ENCODE measurements at regions of chr7 and their contacts with region 1.

Region 1: GRCh38 chr7:36487756-36488336 is 98.2 kb downstream of the ANLN start:
- DNase-seq: no peak
- ATAC-seq: no peak
- H3K4me3 ChIP-seq: no peak overlapping the region
- H3K27ac ChIP-seq: no peak overlapping the region
- H3K4me1 ChIP-seq: no peaks in the 10 kb centered on the region
- H3K27me3 ChIP-seq: no peaks in the 10 kb centered on the region

Region 2: GRCh38 chr7:36670585-36671431 is 183.0 kb after region 1 on chr7:
- intact Hi-C with region 1: loop called in 2 of 4 experiments (anchors 5 kb)
- DNase-seq: peak; percentile 18 to 59 (median 58)
- ATAC-seq: peak; percentile 65 to 70
- H3K4me3 ChIP-seq: no peak overlapping the region
- H3K27ac ChIP-seq: no peak overlapping the region
- H3K4me1 ChIP-seq: no peaks in the 10 kb centered on the region
- H3K27me3 ChIP-seq: no peaks in the 10 kb centered on the region

Region 3: DNA sequence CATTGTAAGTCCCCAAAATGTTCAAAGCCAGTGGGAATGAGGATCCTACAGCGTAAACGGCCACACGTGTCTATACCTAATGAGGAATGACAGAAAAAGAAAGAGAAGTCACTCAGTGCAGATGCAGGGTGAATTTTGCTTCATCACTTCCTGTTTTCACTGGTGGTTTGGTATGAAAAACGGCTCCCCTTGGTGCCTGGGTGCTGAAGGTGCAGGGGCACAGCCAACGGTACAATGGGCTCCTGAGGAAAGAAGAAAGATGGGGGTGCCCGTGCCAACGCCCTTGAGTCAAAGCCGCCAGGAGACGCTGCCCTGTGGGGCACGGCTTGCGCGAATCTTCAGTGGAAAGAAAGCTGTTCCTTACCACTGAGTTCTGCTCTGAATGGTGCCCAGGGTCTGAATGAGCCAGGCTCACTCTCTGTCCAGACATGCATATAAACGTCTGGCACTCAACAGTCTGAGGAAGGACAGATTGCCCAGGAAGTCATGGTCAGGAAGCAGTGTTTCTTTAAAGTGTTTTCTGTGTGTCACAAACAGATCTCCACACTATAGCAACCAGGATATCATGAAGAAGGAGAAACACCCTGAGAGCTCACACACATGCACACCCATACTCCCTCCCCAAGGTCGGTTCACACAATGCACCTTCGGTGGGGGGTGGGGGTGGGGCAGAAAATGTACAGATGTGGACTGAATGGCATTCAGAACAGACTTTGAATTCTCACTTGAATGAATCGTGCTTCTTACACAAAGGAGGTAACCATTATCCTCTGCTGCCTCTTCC is 855.0 kb after region 1 on chr7:
- intact Hi-C with region 1: no loop called
- DNase-seq: peak in 1 of 3 donors; percentile 59
- ATAC-seq: peak; percentile 44 to 51
- H3K4me3 ChIP-seq: no peak overlapping the region
- H3K27ac ChIP-seq: no peak overlapping the region
- H3K4me1 ChIP-seq: peaks cover 4% of the 10 kb centered on the region
- H3K27me3 ChIP-seq: no peaks in the 10 kb centered on the region